ENCODE measurements at regions of chr7 and their contacts with region 1.

Region 1: GRCh38 chr7:78197447-78197846 is 398.9 kb downstream of the PHTF2 start:
- DNase-seq: no peak
- ATAC-seq: no peak
- H3K4me3 ChIP-seq: no peak overlapping the region
- H3K27ac ChIP-seq: no peak overlapping the region
- H3K4me1 ChIP-seq: no peaks in the 10 kb centered on the region
- H3K27me3 ChIP-seq: peaks cover 2% of the 10 kb centered on the region; the same call in 1 of the 2 replicates
- CTCF ChIP-seq: no peak

Region 2: GRCh38 chr7:78039790-78040776 is 157.4 kb before region 1 on chr7:
- CTCF ChIA-PET with region 1: no interaction called
- POLR2A ChIA-PET with region 1: no interaction called
- in situ Hi-C with region 1: no loop called
- intact Hi-C with region 1: no loop called
- DNase-seq: no peak
- ATAC-seq: peak; percentile 72; the same call in 1 of the 2 replicates
- H3K4me3 ChIP-seq: no peak overlapping the region
- H3K27ac ChIP-seq: no peak overlapping the region
- H3K4me1 ChIP-seq: no peaks in the 10 kb centered on the region
- H3K27me3 ChIP-seq: peaks cover 2% of the 10 kb centered on the region; the same call in 1 of the 2 replicates
- CTCF ChIP-seq: peak; percentile 77

Region 3: GRCh38 chr7:78090616-78091015 is 106.8 kb before region 1 on chr7:
- CTCF ChIA-PET with region 1: interaction called, 4 read pairs
- POLR2A ChIA-PET with region 1: interaction called, 13 read pairs
- in situ Hi-C with region 1: no loop called
- intact Hi-C with region 1: no loop called
- DNase-seq: peak; percentile 10
- ATAC-seq: 0 out of 2 replicates have a peak, but pooled peaks have one; percentile 42
- H3K4me3 ChIP-seq: no peak overlapping the region
- H3K27ac ChIP-seq: no peak overlapping the region
- H3K4me1 ChIP-seq: no peaks in the 10 kb centered on the region
- H3K27me3 ChIP-seq: peaks cover 8% of the 10 kb centered on the region; the same call in 1 of the 2 replicates
- CTCF ChIP-seq: peak; percentile 13; the same call in 1 of the 2 replicates

Measured in Panc1 (cell line).